ENCODE measurements at regions of chr14 and their contacts with region 1.

Region 1: GRCh38 chr14:24093901-24094761 is at the start of gene PCK2:
- DNase-seq: peak; percentile 94 to 96
- ATAC-seq: peak; percentile 87 to 92 (median 88)
- H3K4me3 ChIP-seq: peak within 1 kb of the TSS; percentile 80
- H3K27ac ChIP-seq: peak within 1 kb of the TSS; percentile 75
- H3K4me1 ChIP-seq: peaks cover 6% of the 10 kb centered on the region
- H3K27me3 ChIP-seq: no peaks in the 10 kb centered on the region
- CTCF ChIP-seq: no peak
- total RNA-seq, gene PCK2: 2.1 to 4.5 (median 2.7) TPM

Region 2: GRCh38 chr14:24013654-24014514 is 80.2 kb before region 1 on chr14:
- intact Hi-C with region 1: loop called (anchors 2 to 5 kb)
- DNase-seq: no peak
- ATAC-seq: peak; percentile 84 to 93 (median 92)
- H3K4me3 ChIP-seq: peak overlapping the region; percentile 4
- H3K27ac ChIP-seq: no peak overlapping the region
- H3K4me1 ChIP-seq: peaks cover 4% of the 10 kb centered on the region
- H3K27me3 ChIP-seq: no peaks in the 10 kb centered on the region
- CTCF ChIP-seq: peak; percentile 91